AG04450 (cell line): ENCODE measurements at regions of chr12 and their contacts with region 1.

Region 1: GRCh38 chr12:58540480-58541299 is 379.6 kb downstream of the LRIG3 start:
- DNase-seq: peak; percentile 85
- H3K4me3 ChIP-seq: no peak overlapping the region
- H3K27ac ChIP-seq: no peak overlapping the region
- H3K27me3 ChIP-seq: no peaks in the 10 kb centered on the region
- CTCF ChIP-seq: peak; percentile 94

Region 2: GRCh38 chr12:57983146-57983857 is 557.4 kb before region 1 on chr12:
- CTCF ChIA-PET with region 1: interaction called, 22 read pairs
- POLR2A ChIA-PET with region 1: no interaction called
- DNase-seq: peak; percentile 32
- H3K4me3 ChIP-seq: no peak overlapping the region
- H3K27ac ChIP-seq: no peak overlapping the region
- H3K27me3 ChIP-seq: peaks cover 2% of the 10 kb centered on the region
- CTCF ChIP-seq: peak; percentile 71

Region 3: DNA sequence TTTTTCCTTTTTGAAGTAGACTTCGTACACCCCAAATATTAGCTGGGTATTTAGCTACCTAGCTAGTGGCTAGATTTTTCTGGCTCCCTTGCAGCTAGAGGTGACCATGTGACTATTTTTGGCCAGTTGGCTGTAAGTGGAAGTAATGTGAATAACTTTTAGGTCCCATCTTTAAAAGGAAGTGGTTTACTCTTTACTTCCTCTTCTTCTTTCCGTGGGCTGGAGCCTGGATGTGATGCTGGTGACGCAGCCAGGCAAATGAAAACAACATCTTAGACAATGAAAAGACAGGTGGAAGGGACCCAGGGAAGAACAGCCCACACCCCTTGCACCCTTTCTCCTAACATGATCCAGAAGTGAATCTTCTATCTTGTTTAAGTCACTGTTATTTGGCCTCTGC is 353.8 kb before region 1 on chr12:
- CTCF ChIA-PET with region 1: no interaction called
- POLR2A ChIA-PET with region 1: no interaction called
- DNase-seq: no peak
- H3K4me3 ChIP-seq: no peak overlapping the region
- H3K27ac ChIP-seq: no peak overlapping the region
- H3K27me3 ChIP-seq: peaks cover 5% of the 10 kb centered on the region
- CTCF ChIP-seq: no peak

Region 4: GRCh38 chr12:58529897-58530741 is 10.6 kb before region 1 on chr12:
- CTCF ChIA-PET with region 1: interaction called, 6 read pairs
- POLR2A ChIA-PET with region 1: interaction called, 10 read pairs
- DNase-seq: peak; percentile 88
- H3K4me3 ChIP-seq: no peak overlapping the region
- H3K27ac ChIP-seq: peak overlapping the region; percentile 77
- H3K27me3 ChIP-seq: no peaks in the 10 kb centered on the region
- CTCF ChIP-seq: no peak

Region 5: DNA sequence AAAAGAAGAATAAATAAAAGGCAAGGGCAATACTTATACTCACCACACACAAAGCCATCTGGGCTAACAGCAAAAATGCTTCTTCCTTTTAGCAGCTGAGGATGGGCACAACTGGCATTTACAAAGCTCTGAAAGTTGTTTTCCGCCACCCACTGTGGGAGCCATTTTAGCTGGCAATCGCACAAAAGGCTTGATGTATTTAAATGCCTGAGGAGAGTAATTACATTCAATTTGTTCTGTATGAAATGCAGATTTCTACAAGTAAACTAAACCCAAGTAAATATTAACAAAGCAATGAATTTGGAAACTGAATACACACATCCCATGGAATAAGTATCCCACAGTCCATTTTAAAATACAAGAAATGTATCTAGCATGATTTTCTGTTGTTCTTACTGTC is 342.1 kb after region 1 on chr12:
- CTCF ChIA-PET with region 1: interaction called, 10 read pairs
- POLR2A ChIA-PET with region 1: no interaction called
- DNase-seq: no peak
- H3K4me3 ChIP-seq: no peak overlapping the region
- H3K27ac ChIP-seq: no peak overlapping the region
- H3K27me3 ChIP-seq: no peaks in the 10 kb centered on the region
- CTCF ChIP-seq: no peak

Region 6: DNA sequence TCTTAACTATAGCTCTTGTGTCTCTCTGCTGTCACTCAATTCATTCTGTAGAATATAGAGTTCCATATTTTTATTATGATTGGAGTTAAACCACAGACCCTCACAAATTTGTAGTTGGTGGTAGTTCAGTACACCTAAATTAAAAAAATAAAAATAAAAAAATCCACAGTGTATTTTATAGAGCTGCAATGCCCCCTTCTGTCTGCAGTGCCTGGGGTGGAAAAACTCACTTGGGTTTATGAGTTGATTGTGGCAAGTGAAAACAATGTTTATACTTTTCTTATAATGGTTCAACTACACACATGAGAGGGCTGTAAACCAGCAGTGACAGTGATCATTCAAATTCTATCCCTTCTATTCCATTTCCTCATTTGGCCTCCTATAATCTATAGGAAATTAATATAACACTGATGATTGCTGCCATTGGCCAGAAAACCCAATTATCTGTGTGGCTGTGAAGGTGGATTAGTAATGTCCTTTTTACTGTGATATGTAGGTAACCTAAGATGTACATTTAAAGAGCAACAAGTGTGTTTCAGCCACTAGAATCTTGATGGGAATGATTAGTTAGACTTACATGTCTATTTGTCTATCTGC is 546.5 kb after region 1 on chr12:
- CTCF ChIA-PET with region 1: interaction called, 69 read pairs
- POLR2A ChIA-PET with region 1: interaction called, 3 read pairs
- DNase-seq: no peak
- H3K4me3 ChIP-seq: no peak overlapping the region
- H3K27ac ChIP-seq: no peak overlapping the region
- H3K27me3 ChIP-seq: no peaks in the 10 kb centered on the region
- CTCF ChIP-seq: peak; percentile 77

Region 7: GRCh38 chr12:59149997-59150642 is 609.4 kb after region 1 on chr12:
- CTCF ChIA-PET with region 1: interaction called, 42 read pairs
- POLR2A ChIA-PET with region 1: no interaction called
- DNase-seq: peak; percentile 43
- H3K4me3 ChIP-seq: no peak overlapping the region
- H3K27ac ChIP-seq: no peak overlapping the region
- H3K27me3 ChIP-seq: no peaks in the 10 kb centered on the region
- CTCF ChIP-seq: peak; percentile 94